H1 (cell line): ENCODE measurements at regions of chr20 and their contacts with region 1.

Region 1: GRCh38 chr20:24303381-24303780 is 166.0 kb upstream of the SYNDIG1 start:
- DNase-seq: no peak
- H3K4me3 ChIP-seq: no peak overlapping the region
- H3K27ac ChIP-seq: no peak overlapping the region
- H3K4me1 ChIP-seq: no peaks in the 10 kb centered on the region
- H3K27me3 ChIP-seq: no peaks in the 10 kb centered on the region
- CTCF ChIP-seq: peak in 1 of 3 experiments; percentile 11; a peak in 1 of 4 replicates
- EP300 ChIP-seq: no peak
- POLR2A ChIP-seq: no peak
- RAD21 ChIP-seq: peak; percentile 41 to 55

Region 2: GRCh38 chr20:24079661-24080412 is 223.5 kb before region 1 on chr20:
- CTCF ChIA-PET with region 1: no interaction called
- POLR2A ChIA-PET with region 1: no interaction called
- DNase-seq: no peak
- H3K4me3 ChIP-seq: no peak overlapping the region
- H3K27ac ChIP-seq: no peak overlapping the region
- H3K4me1 ChIP-seq: no peaks in the 10 kb centered on the region
- H3K27me3 ChIP-seq: no peaks in the 10 kb centered on the region
- CTCF ChIP-seq: no peak
- EP300 ChIP-seq: no peak
- POLR2A ChIP-seq: no peak
- RAD21 ChIP-seq: no peak

Region 3: DNA sequence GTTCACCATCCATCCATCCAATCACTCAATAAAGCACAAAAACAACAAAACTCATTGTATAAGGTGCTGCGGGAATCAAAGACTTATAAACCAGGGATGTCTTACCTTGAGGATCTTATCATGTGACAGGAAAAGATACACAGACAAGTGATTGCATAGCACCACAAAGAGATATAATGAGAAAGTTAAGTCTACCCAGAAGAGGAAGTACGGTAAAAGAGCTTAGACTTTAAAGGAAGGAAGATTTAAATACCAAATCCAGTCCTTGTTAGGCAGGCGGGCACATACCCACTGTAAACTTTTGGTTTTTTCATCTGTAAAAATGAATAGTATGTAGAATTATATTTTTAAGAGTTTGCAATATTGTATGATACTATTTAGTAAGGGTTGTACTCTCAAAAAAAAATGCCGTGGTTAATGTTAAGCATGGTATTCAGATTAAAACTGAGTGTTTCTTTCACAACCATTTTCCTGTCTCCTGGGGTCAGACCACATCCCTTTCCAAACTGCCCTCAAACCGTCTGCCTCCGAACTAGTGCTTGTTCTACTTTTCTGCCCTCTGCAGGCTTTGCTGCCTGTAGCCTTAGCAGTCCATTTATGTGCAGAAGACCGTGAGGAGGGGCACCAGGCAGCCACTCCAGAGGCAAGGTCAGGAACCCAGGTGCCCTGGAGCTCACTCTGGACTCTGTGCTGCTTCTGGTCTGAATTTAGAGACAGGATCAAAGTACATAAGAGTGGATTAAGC is 13.5 kb before region 1 on chr20:
- CTCF ChIA-PET with region 1: interaction called, 10 read pairs
- POLR2A ChIA-PET with region 1: no interaction called
- DNase-seq: no peak
- H3K4me3 ChIP-seq: no peak overlapping the region
- H3K27ac ChIP-seq: no peak overlapping the region
- H3K4me1 ChIP-seq: no peaks in the 10 kb centered on the region
- H3K27me3 ChIP-seq: no peaks in the 10 kb centered on the region
- CTCF ChIP-seq: peak in 2 of 3 experiments; percentile 4 to 12; a peak in 1 of 4 replicates
- EP300 ChIP-seq: no peak
- POLR2A ChIP-seq: no peak
- RAD21 ChIP-seq: peak; percentile 18 to 40; a peak in 2 of 4 replicates